H1 (cell line): ENCODE measurements at regions of chr17 and their contacts with region 1.

Region 1: GRCh38 chr17:60641810-60642220 is 35.8 kb upstream of the BCAS3 start:
- DNase-seq: peak; percentile 15 to 48
- H3K4me3 ChIP-seq: no peak overlapping the region
- H3K27ac ChIP-seq: no peak overlapping the region
- H3K4me1 ChIP-seq: no peaks in the 10 kb centered on the region
- H3K27me3 ChIP-seq: no peaks in the 10 kb centered on the region
- CTCF ChIP-seq: peak; percentile 33 to 83 (median 75)
- EP300 ChIP-seq: no peak
- POLR2A ChIP-seq: no peak
- RAD21 ChIP-seq: peak; percentile 70 to 79

Region 2: GRCh38 chr17:60468371-60468770 is 173.4 kb before region 1 on chr17:
- CTCF ChIA-PET with region 1: interaction called, 16 read pairs
- POLR2A ChIA-PET with region 1: no interaction called
- DNase-seq: no peak
- H3K4me3 ChIP-seq: no peak overlapping the region
- H3K27ac ChIP-seq: no peak overlapping the region
- H3K4me1 ChIP-seq: no peaks in the 10 kb centered on the region
- H3K27me3 ChIP-seq: no peaks in the 10 kb centered on the region
- CTCF ChIP-seq: no peak
- EP300 ChIP-seq: no peak
- POLR2A ChIP-seq: no peak
- RAD21 ChIP-seq: no peak

Region 3: GRCh38 chr17:60577147-60577915 is 64.5 kb before region 1 on chr17:
- CTCF ChIA-PET with region 1: interaction called, 18 read pairs
- POLR2A ChIA-PET with region 1: no interaction called
- DNase-seq: no peak
- H3K4me3 ChIP-seq: no peak overlapping the region
- H3K27ac ChIP-seq: no peak overlapping the region
- H3K4me1 ChIP-seq: peaks cover 0 to 7% (median under 1%) of the 10 kb centered on the region in 4 experiments; a peak in 1 of 7 replicates
- H3K27me3 ChIP-seq: no peaks in the 10 kb centered on the region
- CTCF ChIP-seq: no peak
- EP300 ChIP-seq: no peak
- POLR2A ChIP-seq: no peak
- RAD21 ChIP-seq: peak; percentile 30 to 37; a peak in 3 of 4 replicates

Region 4: GRCh38 chr17:60630352-60630751 is 11.5 kb before region 1 on chr17:
- CTCF ChIA-PET with region 1: interaction called, 29 read pairs
- POLR2A ChIA-PET with region 1: no interaction called
- DNase-seq: no peak
- H3K4me3 ChIP-seq: no peak overlapping the region
- H3K27ac ChIP-seq: no peak overlapping the region
- H3K4me1 ChIP-seq: no peaks in the 10 kb centered on the region
- H3K27me3 ChIP-seq: no peaks in the 10 kb centered on the region
- CTCF ChIP-seq: no peak
- EP300 ChIP-seq: no peak
- POLR2A ChIP-seq: no peak
- RAD21 ChIP-seq: no peak

Region 5: DNA sequence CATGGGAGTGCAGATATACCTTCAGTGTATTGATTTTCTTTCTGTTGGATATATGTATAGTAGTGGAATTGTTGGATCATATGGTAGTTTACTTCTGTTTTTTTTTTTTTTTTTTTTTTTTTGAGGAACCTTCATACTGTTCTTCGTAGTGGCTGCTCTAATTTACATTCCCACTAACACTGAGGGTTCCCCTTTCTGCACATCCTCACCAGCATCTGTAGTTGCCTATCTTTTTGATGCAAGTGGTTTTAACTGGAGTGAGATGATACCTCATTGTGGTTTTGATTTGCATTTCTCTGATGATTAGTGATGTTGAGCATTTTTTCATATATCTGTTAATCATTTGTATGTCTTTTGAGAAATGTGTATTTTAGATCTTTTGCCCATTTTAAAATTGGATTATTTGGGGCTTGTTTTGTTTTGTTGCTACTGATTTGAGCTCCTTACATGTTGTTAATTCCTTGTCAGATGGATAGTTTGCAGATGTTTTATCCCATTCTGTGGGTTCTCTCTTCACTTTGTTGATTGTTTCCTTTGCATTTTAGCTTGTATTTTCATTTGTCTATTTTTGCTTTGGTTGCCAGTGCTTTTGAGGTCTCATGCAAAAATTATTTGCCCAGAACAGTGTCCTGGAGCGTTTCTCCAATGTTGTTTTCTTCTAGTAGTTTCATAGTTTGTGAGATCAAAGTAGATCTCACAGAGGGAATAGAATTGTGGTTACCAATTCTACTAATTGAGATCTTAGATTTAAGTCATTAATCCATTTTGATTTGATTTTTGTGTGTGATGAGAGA is 10.8 kb after region 1 on chr17:
- CTCF ChIA-PET with region 1: interaction called, 12 read pairs
- POLR2A ChIA-PET with region 1: no interaction called
- DNase-seq: no peak
- H3K4me3 ChIP-seq: no peak overlapping the region
- H3K27ac ChIP-seq: no peak overlapping the region
- H3K4me1 ChIP-seq: no peaks in the 10 kb centered on the region
- H3K27me3 ChIP-seq: no peaks in the 10 kb centered on the region
- CTCF ChIP-seq: no peak
- EP300 ChIP-seq: no peak
- POLR2A ChIP-seq: no peak
- RAD21 ChIP-seq: no peak